Cardiac septum (tissue), 1 donor: ENCODE measurements at regions of chr3 and their contacts with region 1.

Region 1: GRCh38 chr3:133805527-133806475 is at the start of gene SRPRB:
- DNase-seq: peak; percentile 97
- total RNA-seq, gene SRPRB: 27.6 TPM

Region 2: GRCh38 chr3:134485718-134486576 is 680.1 kb after region 1 on chr3 and contains the starts of genes ANAPC13 and CEP63:
- intact Hi-C with region 1: loop called (anchors 10 kb)
- DNase-seq: peak; percentile 96
- total RNA-seq, gene ANAPC13: 85.6 TPM
- total RNA-seq, gene CEP63: 32.1 TPM